SK-N-SH (cell line): ENCODE measurements at regions of chr6 and their contacts with region 1.

Region 1: GRCh38 chr6:70310063-70310694 is 7.3 kb upstream of the COL9A1 start:
- DNase-seq: peak; percentile 8
- H3K4me3 ChIP-seq: peak overlapping the region in 1 of 2 experiments; percentile 11; a peak in 1 of 4 replicates
- H3K27ac ChIP-seq: no peak overlapping the region
- H3K4me1 ChIP-seq: no peaks in the 10 kb centered on the region
- H3K27me3 ChIP-seq: peaks cover under 1% of the 10 kb centered on the region; the same call in 1 of the 2 replicates
- CTCF ChIP-seq: peak; percentile 83
- EP300 ChIP-seq: no peak
- RAD21 ChIP-seq: peak; percentile 82

Region 2: GRCh38 chr6:70133246-70133645 is 176.9 kb before region 1 on chr6:
- CTCF ChIA-PET with region 1: no interaction called
- POLR2A ChIA-PET with region 1: no interaction called
- DNase-seq: no peak
- H3K4me3 ChIP-seq: no peak overlapping the region
- H3K27ac ChIP-seq: no peak overlapping the region
- H3K4me1 ChIP-seq: peaks cover 0 to 4% of the 10 kb centered on the region in 2 experiments; a peak in 2 of 4 replicates
- H3K27me3 ChIP-seq: no peaks in the 10 kb centered on the region
- CTCF ChIP-seq: no peak
- EP300 ChIP-seq: no peak
- RAD21 ChIP-seq: no peak

Region 3: GRCh38 chr6:70282312-70282918 is 27.8 kb before region 1 on chr6:
- CTCF ChIA-PET with region 1: interaction called, 10 read pairs
- POLR2A ChIA-PET with region 1: no interaction called
- DNase-seq: peak; percentile 42
- H3K4me3 ChIP-seq: peak overlapping the region in 1 of 2 experiments; percentile 2; a peak in 1 of 4 replicates
- H3K27ac ChIP-seq: no peak overlapping the region
- H3K4me1 ChIP-seq: no peaks in the 10 kb centered on the region; a peak in 2 of 4 replicates
- H3K27me3 ChIP-seq: no peaks in the 10 kb centered on the region
- CTCF ChIP-seq: no peak
- EP300 ChIP-seq: no peak
- RAD21 ChIP-seq: no peak

Region 4: GRCh38 chr6:70327036-70327435 is 16.9 kb after region 1 on chr6:
- CTCF ChIA-PET with region 1: interaction called, 42 read pairs
- POLR2A ChIA-PET with region 1: no interaction called
- DNase-seq: no peak
- H3K4me3 ChIP-seq: no peak overlapping the region
- H3K27ac ChIP-seq: no peak overlapping the region
- H3K4me1 ChIP-seq: no peaks in the 10 kb centered on the region
- H3K27me3 ChIP-seq: no peaks in the 10 kb centered on the region
- CTCF ChIP-seq: no peak
- EP300 ChIP-seq: no peak
- RAD21 ChIP-seq: no peak

Region 5: DNA sequence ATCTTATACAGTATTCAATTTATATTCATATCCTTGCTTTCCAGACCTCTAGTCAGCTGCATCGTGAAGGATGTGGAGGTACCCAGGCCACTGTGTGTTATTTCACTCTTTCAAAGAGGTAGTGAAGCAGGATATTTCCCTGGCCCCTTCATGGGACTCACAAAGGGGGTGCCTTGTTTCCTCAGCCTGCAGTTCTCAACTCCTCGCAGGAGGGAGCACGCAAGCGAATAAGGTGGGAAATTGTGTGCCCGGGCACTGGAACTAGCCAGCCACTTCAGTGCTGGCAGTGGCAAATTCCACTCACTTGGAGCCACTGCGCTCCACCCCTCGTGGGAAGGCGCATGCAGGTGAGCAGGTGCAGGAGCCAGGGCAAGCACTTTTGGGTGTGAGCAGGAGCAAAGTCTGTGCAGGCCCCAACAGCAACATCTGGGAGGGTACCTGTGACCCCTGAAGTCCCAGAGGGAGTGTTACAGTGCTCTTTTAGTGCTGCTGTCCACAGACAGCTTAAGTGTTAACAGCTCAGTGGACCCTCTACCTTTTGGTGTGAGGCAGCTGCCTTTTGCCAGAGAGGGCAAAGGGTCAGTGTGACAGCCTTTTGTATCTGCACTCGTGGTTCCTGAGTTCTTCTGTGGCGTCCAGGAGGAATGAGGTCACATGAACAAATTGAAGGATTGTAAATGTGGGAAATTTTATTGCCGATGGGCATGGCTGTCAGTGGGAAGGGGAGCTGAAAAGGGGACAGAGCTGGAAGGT is 53.7 kb after region 1 on chr6:
- CTCF ChIA-PET with region 1: interaction called, 321 read pairs
- POLR2A ChIA-PET with region 1: no interaction called
- DNase-seq: no peak
- H3K4me3 ChIP-seq: no peak overlapping the region
- H3K27ac ChIP-seq: no peak overlapping the region
- H3K4me1 ChIP-seq: no peaks in the 10 kb centered on the region
- H3K27me3 ChIP-seq: peaks cover 6% of the 10 kb centered on the region; the same call in 1 of the 2 replicates
- CTCF ChIP-seq: no peak
- EP300 ChIP-seq: no peak
- RAD21 ChIP-seq: no peak

Region 6: DNA sequence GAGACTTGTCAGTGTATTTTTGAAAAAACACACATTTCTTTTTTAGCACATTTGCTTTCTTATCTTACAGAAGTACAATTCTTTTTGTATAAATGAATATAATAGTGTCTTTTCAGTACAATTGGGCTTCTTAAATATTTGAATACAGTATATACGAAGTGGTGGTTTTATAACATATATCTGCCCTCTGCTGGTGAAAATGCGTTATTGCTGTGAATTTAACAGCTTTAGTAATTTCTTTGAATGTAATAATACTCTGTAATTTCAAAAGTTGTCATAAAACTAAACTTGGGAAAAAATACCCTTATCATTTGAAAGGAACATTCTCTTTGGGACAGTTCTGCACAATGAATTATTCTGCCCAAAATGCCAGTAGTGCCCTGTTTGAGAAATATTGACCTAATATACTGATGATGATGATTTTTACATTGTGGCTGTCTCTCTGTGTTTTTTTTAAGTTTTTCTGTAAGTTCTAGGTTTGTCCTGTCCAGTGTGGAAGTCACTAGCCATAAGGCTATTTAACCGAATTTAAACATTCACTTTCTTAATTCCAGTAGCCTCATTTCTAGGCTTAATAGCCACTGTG is 376.5 kb after region 1 on chr6:
- CTCF ChIA-PET with region 1: interaction called, 11 read pairs
- POLR2A ChIA-PET with region 1: no interaction called
- DNase-seq: peak; percentile 24
- H3K4me3 ChIP-seq: no peak overlapping the region; a peak in 1 of 4 replicates
- H3K27ac ChIP-seq: no peak overlapping the region
- H3K4me1 ChIP-seq: no peaks in the 10 kb centered on the region
- H3K27me3 ChIP-seq: no peaks in the 10 kb centered on the region
- CTCF ChIP-seq: peak; percentile 88
- EP300 ChIP-seq: no peak
- RAD21 ChIP-seq: peak; percentile 73